ENCODE measurements at regions of chr7 and their contacts with region 1.

Region 1: GRCh38 chr7:137953665-137954470 is 48.0 kb downstream of the CREB3L2 start:
- DNase-seq: no peak
- H3K4me3 ChIP-seq: no peak overlapping the region
- CTCF ChIP-seq: no peak

Region 2: GRCh38 chr7:137519947-137520346 is 433.9 kb before region 1 on chr7:
- CTCF ChIA-PET with region 1: no interaction called
- POLR2A ChIA-PET with region 1: no interaction called
- DNase-seq: no peak
- H3K4me3 ChIP-seq: no peak overlapping the region
- CTCF ChIP-seq: no peak

Region 3: GRCh38 chr7:137913985-137914384 is 39.9 kb before region 1 on chr7:
- CTCF ChIA-PET with region 1: no interaction called
- POLR2A ChIA-PET with region 1: no interaction called
- DNase-seq: no peak
- H3K4me3 ChIP-seq: no peak overlapping the region
- CTCF ChIP-seq: no peak

Region 4: DNA sequence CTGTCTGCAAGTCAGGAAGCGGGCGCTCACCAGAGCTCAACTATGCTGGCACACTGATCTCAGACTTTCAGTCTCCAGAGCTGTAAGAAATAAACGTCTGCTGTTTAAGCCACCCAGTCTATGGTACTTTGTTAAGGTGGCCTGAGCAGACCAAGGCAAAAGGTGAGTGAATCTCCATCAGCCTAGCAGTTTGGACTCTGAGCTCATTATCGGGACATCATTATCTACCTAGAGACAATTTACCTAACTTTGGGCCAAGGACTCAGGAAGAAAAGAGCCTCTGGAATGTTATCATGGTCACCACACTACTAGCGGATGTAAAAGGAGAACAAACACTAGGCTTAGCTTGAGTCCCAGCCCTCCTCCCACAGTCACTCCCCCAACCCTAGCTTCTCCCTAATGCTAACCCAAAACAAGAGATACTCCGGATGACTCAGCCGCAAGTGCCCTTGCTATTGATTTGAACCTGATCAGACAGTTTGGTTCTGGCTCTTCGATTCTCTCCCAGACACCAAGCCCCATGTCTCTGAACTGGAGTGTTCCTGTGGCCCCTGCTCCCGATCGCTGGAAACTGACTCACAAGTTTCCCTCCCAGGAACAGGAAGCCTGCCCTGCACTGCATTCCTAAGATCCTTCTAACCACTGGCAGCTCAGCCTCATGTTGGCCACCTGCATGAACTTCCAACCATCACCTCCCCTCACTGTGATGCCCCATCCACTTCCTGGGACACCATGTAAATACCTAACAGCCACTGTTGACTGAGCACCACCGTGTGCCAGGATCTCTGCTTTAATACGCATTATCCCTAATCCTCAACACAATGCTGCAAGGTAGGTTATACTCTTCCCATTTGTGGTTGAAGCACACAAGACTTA is 13.5 kb after region 1 on chr7:
- CTCF ChIA-PET with region 1: interaction called, 7 read pairs
- POLR2A ChIA-PET with region 1: interaction called, 10 read pairs
- DNase-seq: no peak
- H3K4me3 ChIP-seq: no peak overlapping the region
- CTCF ChIP-seq: no peak